Right ventricle myocardium inferior (tissue), 1 donor: ENCODE measurements at regions of chr9 and their contacts with region 1.

Region 1: GRCh38 chr9:99184475-99185347 is 37.0 kb downstream of the ALG2 start:
- DNase-seq: peak; percentile 88
- ATAC-seq: peak; percentile 91

Region 2: GRCh38 chr9:99999797-100000196 is 815.1 kb after region 1 on chr9:
- intact Hi-C with region 1: loop called (anchors 10 kb)
- DNase-seq: no peak
- ATAC-seq: no peak

Region 3: GRCh38 chr9:100216178-100216787 is 1031.6 kb after region 1 on chr9:
- intact Hi-C with region 1: loop called (anchors 10 kb)
- DNase-seq: no peak
- ATAC-seq: no peak